Esophagus squamous epithelium (tissue), 5 donors: ENCODE measurements at regions of chr3 and their contacts with region 1.

Region 1: GRCh38 chr3:151282921-151283320 is 4.6 kb upstream of the P2RY14 start:
- DNase-seq: no peak
- H3K4me3 ChIP-seq: no peak overlapping the region
- H3K27ac ChIP-seq: peak overlapping the region in 2 of 4 donors; percentile 64 to 71
- H3K4me1 ChIP-seq: peaks cover 0 to 20% (median 9%) of the 10 kb centered on the region in 3 donors
- H3K27me3 ChIP-seq: no peaks in the 10 kb centered on the region
- CTCF ChIP-seq: peak; percentile 49 to 76 (median 66)
- POLR2A ChIP-seq: no peak

Region 2: DNA sequence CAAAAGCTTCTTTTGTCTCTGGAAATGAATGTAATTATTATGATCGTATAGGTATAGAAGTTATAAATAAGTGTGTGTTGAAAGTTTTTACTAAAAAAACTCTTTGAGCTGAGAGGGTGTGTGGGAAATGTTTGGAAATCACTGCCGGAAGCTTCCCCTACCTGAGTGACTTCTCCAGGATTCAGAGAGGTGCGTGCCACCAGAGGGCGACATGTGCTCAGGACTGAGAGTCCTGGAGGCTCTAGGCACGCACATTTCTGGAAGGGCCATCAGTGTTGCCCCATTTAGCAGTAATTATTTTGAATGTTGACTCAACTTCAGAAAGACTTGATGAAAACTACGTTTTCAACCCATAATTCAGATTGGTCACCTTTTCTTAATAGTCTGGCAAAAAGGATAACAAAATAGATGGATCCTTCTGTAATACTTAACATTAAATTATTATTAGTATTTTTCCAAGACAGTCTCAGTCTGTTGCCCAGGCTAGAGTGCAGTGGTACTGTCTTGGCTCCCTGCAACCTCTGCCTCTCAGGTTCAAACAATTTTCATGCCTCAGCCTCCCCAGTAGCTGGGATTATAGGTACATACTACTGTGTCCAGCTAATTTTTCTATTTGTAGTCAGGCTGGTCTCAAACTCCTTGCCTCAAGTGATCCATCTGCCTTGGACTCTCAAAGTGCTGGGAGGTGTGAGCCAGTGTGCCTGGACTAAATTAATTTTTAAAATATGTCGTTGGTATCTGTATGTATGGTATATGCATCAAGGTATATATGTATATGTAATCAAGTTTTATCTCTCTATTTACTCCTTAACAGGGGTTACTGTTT is 114.4 kb before region 1 on chr3:
- intact Hi-C with region 1: loop called (anchors 5 kb)
- DNase-seq: no peak
- H3K4me3 ChIP-seq: no peak overlapping the region
- H3K27ac ChIP-seq: no peak overlapping the region
- H3K4me1 ChIP-seq: peaks cover 0 to 19% (median 0%) of the 10 kb centered on the region in 3 donors
- H3K27me3 ChIP-seq: no peaks in the 10 kb centered on the region
- CTCF ChIP-seq: peak; percentile 55 to 84 (median 80)
- POLR2A ChIP-seq: no peak

Region 3: DNA sequence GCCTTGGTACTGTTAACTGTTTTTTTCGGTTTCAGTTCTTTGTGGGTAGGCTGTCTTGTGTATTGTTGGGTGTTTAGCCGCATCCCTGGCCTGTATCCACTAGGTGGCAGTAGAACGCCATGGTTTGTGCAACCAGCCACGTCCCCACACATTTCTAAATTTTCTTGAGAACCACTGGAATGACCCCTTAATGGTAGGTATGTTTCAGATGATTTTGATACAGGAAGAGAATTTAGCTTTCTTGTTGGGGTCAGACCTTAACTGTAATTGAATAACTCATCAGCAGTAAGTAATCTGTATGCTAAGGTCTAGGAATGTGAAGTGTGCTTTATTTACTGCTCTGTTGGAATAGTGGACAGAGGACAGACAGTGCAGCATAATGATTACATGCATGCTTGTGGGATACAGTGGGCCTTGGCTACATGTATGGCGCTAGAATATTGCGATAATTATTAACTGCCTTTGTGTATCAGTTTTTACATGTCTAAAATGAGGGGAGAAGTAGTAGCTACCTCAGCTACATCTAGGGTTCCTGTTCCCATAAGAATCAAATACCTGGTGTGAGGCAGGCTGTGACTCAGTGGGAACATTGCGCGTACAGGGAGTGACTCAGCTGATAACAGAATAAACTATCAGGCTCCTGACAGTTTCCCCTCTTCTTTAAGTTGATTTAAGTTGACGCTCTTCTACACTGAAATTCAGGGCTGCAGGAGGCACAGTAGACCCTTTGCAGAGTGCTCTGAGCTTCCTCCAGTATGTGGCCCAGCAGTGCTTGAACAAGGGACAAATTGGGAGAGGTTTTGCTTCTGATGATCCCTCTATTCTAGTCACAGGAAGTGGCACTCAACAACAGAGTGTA is 54.9 kb before region 1 on chr3:
- intact Hi-C with region 1: loop called (anchors 5 kb)
- DNase-seq: no peak
- H3K4me3 ChIP-seq: peak overlapping the region in 1 of 4 donors; percentile 25
- H3K27ac ChIP-seq: peak overlapping the region in 3 of 4 donors; percentile 48 to 74 (median 71)
- H3K4me1 ChIP-seq: peaks cover 14 to 45% (median 15%) of the 10 kb centered on the region in 3 donors
- H3K27me3 ChIP-seq: no peaks in the 10 kb centered on the region
- CTCF ChIP-seq: peak; percentile 74 to 92 (median 86)
- POLR2A ChIP-seq: no peak

Region 4: GRCh38 chr3:151425627-151426335 is 142.9 kb after region 1 on chr3:
- intact Hi-C with region 1: no loop called
- DNase-seq: no peak
- H3K4me3 ChIP-seq: no peak overlapping the region
- H3K27ac ChIP-seq: no peak overlapping the region
- H3K4me1 ChIP-seq: no peaks in the 10 kb centered on the region
- H3K27me3 ChIP-seq: no peaks in the 10 kb centered on the region
- CTCF ChIP-seq: peak in 1 of 6 experiments; percentile 17
- POLR2A ChIP-seq: no peak

Region 5: GRCh38 chr3:151504606-151505005 is 221.7 kb after region 1 on chr3:
- intact Hi-C with region 1: no loop called
- DNase-seq: no peak
- H3K4me3 ChIP-seq: no peak overlapping the region
- H3K27ac ChIP-seq: no peak overlapping the region
- H3K4me1 ChIP-seq: no peaks in the 10 kb centered on the region
- H3K27me3 ChIP-seq: no peaks in the 10 kb centered on the region
- CTCF ChIP-seq: no peak
- POLR2A ChIP-seq: no peak